Activated CD4-positive, alpha-beta T cell treated with anti-CD3 and anti-CD28 coated beads, Interleukin-2, amount 10 ng/mL, durations not matched to agents 24 days and 14 days (primary cell): ENCODE measurements at regions of chr19 and their contacts with region 1.

Region 1: GRCh38 chr19:53553884-53554791 is 16.2 kb downstream of the ZNF331 start:
- DNase-seq: peak; percentile 97
- H3K4me3 Mint-ChIP-seq: peak overlapping the region; percentile 93
- H3K27ac Mint-ChIP-seq: peak overlapping the region; percentile 97
- H3K4me1 Mint-ChIP-seq: peaks cover 18% of the 10 kb centered on the region
- H3K27me3 Mint-ChIP-seq: no peaks in the 10 kb centered on the region

Region 2: GRCh38 chr19:53537480-53538383 is 16.4 kb before region 1 on chr19 and contains the start of gene ZNF331:
- intact Hi-C with region 1: loop called (anchors 1 kb)
- DNase-seq: peak; percentile 96
- H3K4me3 Mint-ChIP-seq: peak within 1 kb of the TSS; percentile 97
- H3K27ac Mint-ChIP-seq: peak within 1 kb of the TSS; percentile 99
- H3K4me1 Mint-ChIP-seq: peaks cover 13% of the 10 kb centered on the region
- H3K27me3 Mint-ChIP-seq: peaks cover 2% of the 10 kb centered on the region
- total RNA-seq, gene ZNF331: 18.2 and 18.9 TPM in 2 replicates

Region 3: GRCh38 chr19:53597023-53597422 is 42.9 kb after region 1 on chr19:
- intact Hi-C with region 1: no loop called
- DNase-seq: no peak
- H3K4me3 Mint-ChIP-seq: no peak overlapping the region
- H3K27ac Mint-ChIP-seq: no peak overlapping the region
- H3K4me1 Mint-ChIP-seq: no peaks in the 10 kb centered on the region
- H3K27me3 Mint-ChIP-seq: no peaks in the 10 kb centered on the region